ENCODE measurements at regions of chr19 and their contacts with region 1.

Region 1: DNA sequence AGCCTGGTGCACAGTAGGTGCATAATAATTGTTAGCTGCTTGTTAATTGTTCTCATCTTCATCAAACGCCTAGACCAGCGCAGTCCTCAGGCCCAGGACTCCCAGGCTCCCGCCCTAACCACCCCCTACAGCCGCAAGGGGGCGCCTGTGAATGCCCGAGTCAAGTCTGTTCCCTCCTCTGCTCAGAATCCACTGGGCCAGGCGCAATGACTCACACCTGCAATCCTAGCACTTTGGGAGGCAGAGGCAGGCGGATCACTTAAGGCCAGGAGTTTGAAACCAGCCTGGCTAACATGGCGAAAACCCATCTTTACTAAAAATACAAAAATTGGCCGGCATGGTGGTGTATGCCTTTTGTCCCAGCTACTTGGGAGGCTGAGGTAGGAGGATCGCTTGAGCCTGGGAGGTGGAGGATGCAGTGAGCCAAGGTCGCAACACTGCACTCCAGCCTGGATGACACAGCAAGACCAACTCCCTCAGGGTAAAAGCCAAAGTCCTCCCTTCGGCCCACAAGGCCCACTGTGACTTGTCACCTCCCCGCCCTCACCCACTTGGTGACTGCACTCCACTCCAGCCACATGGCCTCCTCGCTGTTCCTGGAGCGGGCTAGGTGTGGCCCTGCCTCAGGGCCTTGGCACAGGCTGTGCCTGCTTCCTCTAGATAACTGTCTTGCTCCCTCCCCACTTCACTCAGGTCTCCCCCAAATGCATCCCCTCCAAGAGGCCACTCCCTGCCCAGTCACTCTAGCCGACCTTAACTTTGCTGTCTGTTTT is 9.1 kb downstream of the ZNF653 start:
- DNase-seq: peak; percentile 91
- H3K4me3 ChIP-seq: no peak overlapping the region
- H3K27ac ChIP-seq: no peak overlapping the region
- H3K4me1 ChIP-seq: no peaks in the 10 kb centered on the region
- H3K27me3 ChIP-seq: no peaks in the 10 kb centered on the region

Region 2: GRCh38 chr19:11405846-11406643 is 90.5 kb before region 1 on chr19:
- in situ Hi-C with region 1: no loop called
- DNase-seq: no peak
- H3K4me3 ChIP-seq: no peak overlapping the region
- H3K27ac ChIP-seq: no peak overlapping the region
- H3K4me1 ChIP-seq: no peaks in the 10 kb centered on the region
- H3K27me3 ChIP-seq: no peaks in the 10 kb centered on the region

Region 3: DNA sequence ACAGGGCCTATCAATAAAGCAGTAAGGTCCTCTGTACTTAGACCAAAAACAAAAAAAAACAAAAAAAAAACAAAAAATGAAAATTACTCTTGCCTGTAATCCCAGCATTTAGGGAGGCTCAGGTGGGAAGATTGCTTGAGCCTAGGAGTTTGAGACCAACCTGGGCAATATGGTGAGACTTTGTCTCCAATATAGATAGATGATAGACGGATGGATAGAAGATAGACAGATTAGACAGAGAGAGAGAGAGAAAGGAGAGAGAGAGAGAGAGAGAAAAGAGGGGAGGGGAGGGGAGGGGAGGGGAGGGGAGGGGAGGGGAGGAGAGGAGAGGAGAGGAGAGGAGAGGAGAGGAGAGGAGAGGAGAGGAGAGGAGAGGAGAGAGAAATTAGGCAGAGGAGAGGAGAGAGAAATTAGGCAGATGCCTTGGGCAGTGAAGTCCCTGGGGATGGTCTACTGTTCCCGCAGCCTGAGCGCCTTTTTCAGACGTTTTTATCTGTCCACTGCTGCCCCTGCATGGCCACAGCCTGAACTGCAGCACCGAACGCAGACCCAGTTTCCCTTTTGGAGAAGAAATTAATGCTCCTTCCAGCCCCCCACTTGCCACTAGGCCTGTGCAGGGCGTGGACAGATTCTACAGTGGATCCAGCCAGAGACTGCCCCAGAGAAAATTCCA is 90.9 kb after region 1 on chr19:
- in situ Hi-C with region 1: loop called (anchors 10 kb)
- DNase-seq: peak; percentile 89
- H3K4me3 ChIP-seq: 0 out of 2 replicates have a peak overlapping the region, but pooled peaks have one; percentile 17
- H3K27ac ChIP-seq: no peak overlapping the region
- H3K4me1 ChIP-seq: no peaks in the 10 kb centered on the region
- H3K27me3 ChIP-seq: no peaks in the 10 kb centered on the region

Measured in GM23248 (cell line).